H1 (cell line): ENCODE measurements at regions of chr19 and their contacts with region 1.

Region 1: DNA sequence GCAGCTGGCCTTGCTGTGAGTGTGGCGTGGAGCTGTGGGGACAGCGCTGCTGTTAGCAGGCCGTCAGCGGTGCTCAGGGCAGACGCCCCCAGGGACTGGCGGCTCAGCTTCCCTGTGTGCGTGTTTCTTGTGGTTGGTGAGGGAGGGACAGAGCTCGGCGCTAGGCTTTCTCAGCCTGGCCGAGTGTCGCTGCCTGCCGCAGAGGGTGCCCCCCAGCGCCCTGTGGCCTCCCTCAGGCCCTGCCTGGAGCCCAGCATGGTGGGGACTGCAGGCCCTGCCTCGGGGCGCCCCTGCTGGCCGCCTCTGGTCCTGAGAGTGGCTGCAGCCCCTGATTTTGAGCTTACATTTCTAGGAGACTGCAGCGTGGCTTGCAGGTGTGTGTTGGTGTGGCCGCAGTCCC is 35.5 kb downstream of the DOT1L start:
- DNase-seq: peak in 1 of 2 experiments; percentile 79
- H3K4me3 ChIP-seq: no peak overlapping the region
- H3K27ac ChIP-seq: no peak overlapping the region
- H3K4me1 ChIP-seq: no peaks in the 10 kb centered on the region
- H3K27me3 ChIP-seq: no peaks in the 10 kb centered on the region
- CTCF ChIP-seq: peak; percentile 76 to 82 (median 76)
- EP300 ChIP-seq: 0 out of 3 replicates have a peak, but pooled peaks of 1 of the 2 experiments have one; percentile 14
- POLR2A ChIP-seq: no peak
- RAD21 ChIP-seq: peak; percentile 47 to 65

Region 2: GRCh38 chr19:2160379-2160778 is 38.8 kb before region 1 on chr19:
- CTCF ChIA-PET with region 1: interaction called, 14 read pairs
- POLR2A ChIA-PET with region 1: interaction called, 4 read pairs
- DNase-seq: no peak
- H3K4me3 ChIP-seq: no peak overlapping the region
- H3K27ac ChIP-seq: no peak overlapping the region
- H3K4me1 ChIP-seq: no peaks in the 10 kb centered on the region
- H3K27me3 ChIP-seq: no peaks in the 10 kb centered on the region
- CTCF ChIP-seq: no peak
- EP300 ChIP-seq: no peak
- POLR2A ChIP-seq: no peak
- RAD21 ChIP-seq: no peak

Region 3: GRCh38 chr19:2168619-2169424 is 30.4 kb before region 1 on chr19:
- CTCF ChIA-PET with region 1: interaction called, 14 read pairs
- POLR2A ChIA-PET with region 1: interaction called, 4 read pairs
- DNase-seq: no peak
- H3K4me3 ChIP-seq: no peak overlapping the region
- H3K27ac ChIP-seq: no peak overlapping the region
- H3K4me1 ChIP-seq: peaks cover 3 to 24% (median 9%) of the 10 kb centered on the region in 4 experiments
- H3K27me3 ChIP-seq: no peaks in the 10 kb centered on the region
- CTCF ChIP-seq: no peak
- EP300 ChIP-seq: no peak
- POLR2A ChIP-seq: no peak
- RAD21 ChIP-seq: no peak

Region 4: DNA sequence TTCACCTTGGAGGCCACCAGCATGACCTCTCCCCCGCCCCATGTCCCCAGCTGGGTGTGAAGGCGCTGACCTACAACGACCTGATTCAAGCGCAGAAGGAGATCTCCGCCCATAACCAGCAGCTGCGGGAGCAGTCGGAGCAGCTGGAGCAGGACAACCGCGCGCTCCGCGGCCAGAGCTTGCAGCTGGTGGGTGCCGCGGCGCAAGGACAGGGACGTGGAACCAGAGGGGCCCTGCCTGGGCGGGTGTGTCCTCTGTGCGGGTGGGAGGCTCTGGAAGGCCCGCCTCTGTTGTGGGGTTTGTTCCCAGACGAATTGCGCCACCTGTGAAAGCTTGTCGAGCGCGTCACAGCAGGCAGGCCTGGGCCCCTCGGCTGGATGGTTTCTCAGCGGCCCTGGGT is 14.6 kb after region 1 on chr19:
- CTCF ChIA-PET with region 1: interaction called, 50 read pairs
- POLR2A ChIA-PET with region 1: interaction called, 5 read pairs
- DNase-seq: no peak
- H3K4me3 ChIP-seq: no peak overlapping the region
- H3K27ac ChIP-seq: no peak overlapping the region
- H3K4me1 ChIP-seq: no peaks in the 10 kb centered on the region
- H3K27me3 ChIP-seq: no peaks in the 10 kb centered on the region
- CTCF ChIP-seq: no peak
- EP300 ChIP-seq: no peak
- POLR2A ChIP-seq: no peak
- RAD21 ChIP-seq: no peak